WTC11 (cell line): ENCODE measurements at regions of chr22 and their contacts with region 1.

Region 1: DNA sequence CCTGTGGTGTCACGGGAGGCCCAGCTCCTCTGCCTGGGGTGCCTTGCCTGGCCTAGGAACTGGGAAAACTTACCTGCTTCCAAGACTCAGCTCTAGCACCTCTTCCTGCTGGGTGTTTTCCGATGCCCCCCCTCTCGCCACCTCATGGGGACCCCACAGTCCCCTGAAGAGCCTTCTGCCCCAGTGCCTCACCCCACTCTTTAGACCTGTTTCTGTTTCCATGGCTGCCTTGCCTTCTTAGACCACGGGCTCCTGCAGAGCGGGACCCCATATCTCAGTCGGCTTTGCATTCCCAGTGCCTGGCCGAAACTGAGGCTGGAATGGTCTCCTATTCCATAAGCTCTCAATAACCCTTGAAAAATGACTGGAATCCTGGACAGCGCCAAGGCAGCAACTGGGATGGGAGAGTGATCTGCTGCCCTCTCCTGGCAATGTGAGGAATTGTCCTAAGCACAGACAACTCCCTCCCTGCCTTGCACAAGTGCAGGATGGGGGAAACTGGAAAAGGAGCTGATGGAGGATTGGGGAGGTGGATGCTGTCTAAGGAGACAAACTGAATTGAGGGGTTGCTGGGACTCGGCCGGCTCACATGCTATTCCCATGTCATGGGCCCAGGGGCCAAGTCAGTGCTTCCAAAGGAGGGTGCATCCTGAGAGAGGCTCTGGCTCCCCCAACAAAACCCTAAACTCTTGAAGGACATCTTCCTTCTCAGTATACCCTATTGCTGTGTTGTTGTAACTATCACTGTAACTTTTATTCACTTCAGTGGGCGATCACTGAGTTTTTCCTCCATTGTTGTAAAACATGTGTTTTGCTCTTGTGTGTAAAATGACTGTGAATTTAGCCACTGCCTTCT is 26.6 kb upstream of the IL17RA start:
- DNase-seq: peak; percentile 73
- ATAC-seq: peak; percentile 88
- H3K4me3 Mint-ChIP-seq: no peak overlapping the region
- H3K27ac Mint-ChIP-seq: no peak overlapping the region
- H3K4me1 Mint-ChIP-seq: no peaks in the 10 kb centered on the region
- H3K27me3 Mint-ChIP-seq: peaks cover 17% of the 10 kb centered on the region
- CTCF ChIP-seq: peak; percentile 79

Region 2: GRCh38 chr22:16917144-16918003 is 140.8 kb before region 1 on chr22:
- CTCF ChIA-PET with region 1: interaction called, 36 read pairs
- POLR2A ChIA-PET with region 1: no interaction called
- DNase-seq: peak; percentile 63
- ATAC-seq: peak; percentile 75
- H3K4me3 Mint-ChIP-seq: no peak overlapping the region
- H3K27ac Mint-ChIP-seq: no peak overlapping the region
- H3K4me1 Mint-ChIP-seq: no peaks in the 10 kb centered on the region; the same call in 1 of the 2 replicates
- H3K27me3 Mint-ChIP-seq: peaks cover 15% of the 10 kb centered on the region
- CTCF ChIP-seq: peak; percentile 43; the same call in 1 of the 2 replicates

Region 3: GRCh38 chr22:16932577-16932976 is 125.6 kb before region 1 on chr22:
- CTCF ChIA-PET with region 1: interaction called, 15 read pairs
- POLR2A ChIA-PET with region 1: no interaction called
- DNase-seq: no peak
- ATAC-seq: no peak
- H3K4me3 Mint-ChIP-seq: no peak overlapping the region
- H3K27ac Mint-ChIP-seq: no peak overlapping the region
- H3K4me1 Mint-ChIP-seq: no peaks in the 10 kb centered on the region
- H3K27me3 Mint-ChIP-seq: peaks cover 19% of the 10 kb centered on the region
- CTCF ChIP-seq: no peak

Region 4: GRCh38 chr22:17047656-17048055 is 10.5 kb before region 1 on chr22:
- CTCF ChIA-PET with region 1: interaction called, 16 read pairs
- POLR2A ChIA-PET with region 1: no interaction called
- DNase-seq: no peak
- ATAC-seq: no peak
- H3K4me3 Mint-ChIP-seq: no peak overlapping the region
- H3K27ac Mint-ChIP-seq: no peak overlapping the region
- H3K4me1 Mint-ChIP-seq: no peaks in the 10 kb centered on the region
- H3K27me3 Mint-ChIP-seq: peaks cover 14% of the 10 kb centered on the region
- CTCF ChIP-seq: no peak

Region 5: GRCh38 chr22:17077255-17077654 is 19.1 kb after region 1 on chr22:
- CTCF ChIA-PET with region 1: interaction called, 14 read pairs
- POLR2A ChIA-PET with region 1: no interaction called
- DNase-seq: no peak
- ATAC-seq: no peak
- H3K4me3 Mint-ChIP-seq: no peak overlapping the region
- H3K27ac Mint-ChIP-seq: no peak overlapping the region
- H3K4me1 Mint-ChIP-seq: no peaks in the 10 kb centered on the region; the same call in 1 of the 2 replicates
- H3K27me3 Mint-ChIP-seq: no peaks in the 10 kb centered on the region
- CTCF ChIP-seq: no peak

Region 6: DNA sequence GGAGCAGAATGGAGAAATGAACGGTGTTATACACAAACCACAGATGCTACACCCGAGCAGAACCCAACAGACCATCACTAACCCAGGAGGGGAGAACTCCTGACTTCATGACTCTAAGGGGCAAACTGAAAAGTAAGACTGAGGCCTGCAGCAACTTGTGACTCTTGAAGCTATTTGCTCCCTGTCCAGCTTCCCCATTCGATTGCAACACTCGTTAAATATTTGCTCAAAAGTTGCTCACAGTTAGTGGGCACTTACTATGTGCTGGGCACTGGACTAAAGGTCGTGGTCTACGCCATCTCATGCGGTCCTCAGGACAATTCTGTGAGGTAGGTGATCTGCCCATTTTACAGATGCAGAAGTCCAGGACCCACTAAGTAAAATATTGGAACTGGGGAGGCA is 170.5 kb after region 1 on chr22:
- CTCF ChIA-PET with region 1: no interaction called
- POLR2A ChIA-PET with region 1: no interaction called
- DNase-seq: no peak
- ATAC-seq: no peak
- H3K4me3 Mint-ChIP-seq: no peak overlapping the region
- H3K27ac Mint-ChIP-seq: no peak overlapping the region; the same call in 1 of the 2 replicates
- H3K4me1 Mint-ChIP-seq: peaks cover 33% of the 10 kb centered on the region
- H3K27me3 Mint-ChIP-seq: no peaks in the 10 kb centered on the region
- CTCF ChIP-seq: no peak